Sciatic nerve (tissue), 2 donors: ENCODE measurements at regions of chr2 and their contacts with region 1.

Region 1: DNA sequence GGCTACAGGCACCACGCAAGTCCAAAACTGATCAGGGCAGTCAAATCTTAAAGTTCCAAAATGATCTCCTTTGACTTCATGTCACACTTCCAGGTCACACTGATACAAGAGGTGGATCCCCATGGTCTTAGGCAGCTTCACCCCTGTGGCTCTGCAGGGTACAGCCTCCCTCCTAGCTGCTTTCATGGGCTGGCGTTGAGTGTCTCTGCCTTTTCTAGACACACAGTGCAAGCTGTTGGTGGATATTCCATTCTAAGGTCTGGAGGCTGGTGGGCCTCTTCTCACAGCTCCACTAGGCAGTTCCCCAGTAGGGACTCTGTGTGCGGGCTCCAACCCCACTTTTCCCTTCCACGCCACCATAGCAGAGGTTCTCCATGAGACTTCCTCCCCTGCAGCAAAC is 838.2 kb upstream of the CHAC2 start:
- DNase-seq: no peak
- ATAC-seq: no peak

Region 2: GRCh38 chr2:52904355-52904891 is 25.0 kb before region 1 on chr2:
- intact Hi-C with region 1: loop called (anchors 1 kb)
- DNase-seq: no peak
- ATAC-seq: peak; percentile 83